HCT116 (cell line): ENCODE measurements at regions of chr15 and their contacts with region 1.

Region 1: GRCh38 chr15:50315814-50316630 is 39.0 kb downstream of the GABPB1 start:
- DNase-seq: peak; percentile 31
- ATAC-seq: peak; percentile 62
- H3K4me3 ChIP-seq: no peak overlapping the region
- H3K27ac ChIP-seq: no peak overlapping the region
- H3K4me1 ChIP-seq: no peaks in the 10 kb centered on the region; a peak in 1 of 4 replicates
- H3K27me3 ChIP-seq: no peaks in the 10 kb centered on the region
- CTCF ChIP-seq: peak; percentile 57 to 75 (median 58); a peak in 5 of 6 replicates
- POLR2A ChIP-seq: no peak
- RAD21 ChIP-seq: peak; percentile 74

Region 2: GRCh38 chr15:50182219-50183013 is 133.6 kb before region 1 on chr15:
- CTCF ChIA-PET with region 1: interaction called, 10 read pairs
- POLR2A ChIA-PET with region 1: no interaction called
- RAD21 ChIA-PET with region 1: interaction called in 1 of 2 experiments, 6 read pairs
- intact Hi-C with region 1: no loop called
- DNase-seq: peak; percentile 8
- ATAC-seq: peak; percentile 79
- H3K4me3 ChIP-seq: peak overlapping the region; percentile 56 to 68
- H3K27ac ChIP-seq: peak overlapping the region; percentile 43; the same call in 1 of the 2 replicates
- H3K4me1 ChIP-seq: peaks cover 9 to 20% of the 10 kb centered on the region in 2 experiments; a peak in 3 of 4 replicates
- H3K27me3 ChIP-seq: no peaks in the 10 kb centered on the region
- CTCF ChIP-seq: 0 out of 6 replicates have a peak, but pooled peaks of 1 of the 3 experiments have one; percentile 5
- POLR2A ChIP-seq: no peak
- RAD21 ChIP-seq: no peak

Region 3: GRCh38 chr15:50302581-50302980 is 13.4 kb before region 1 on chr15:
- CTCF ChIA-PET with region 1: interaction called, 15 read pairs
- POLR2A ChIA-PET with region 1: interaction called, 5 read pairs
- RAD21 ChIA-PET with region 1: no interaction called
- intact Hi-C with region 1: no loop called
- DNase-seq: no peak
- ATAC-seq: no peak
- H3K4me3 ChIP-seq: no peak overlapping the region
- H3K27ac ChIP-seq: no peak overlapping the region
- H3K4me1 ChIP-seq: no peaks in the 10 kb centered on the region
- H3K27me3 ChIP-seq: no peaks in the 10 kb centered on the region
- CTCF ChIP-seq: no peak
- POLR2A ChIP-seq: no peak
- RAD21 ChIP-seq: no peak

Region 4: DNA sequence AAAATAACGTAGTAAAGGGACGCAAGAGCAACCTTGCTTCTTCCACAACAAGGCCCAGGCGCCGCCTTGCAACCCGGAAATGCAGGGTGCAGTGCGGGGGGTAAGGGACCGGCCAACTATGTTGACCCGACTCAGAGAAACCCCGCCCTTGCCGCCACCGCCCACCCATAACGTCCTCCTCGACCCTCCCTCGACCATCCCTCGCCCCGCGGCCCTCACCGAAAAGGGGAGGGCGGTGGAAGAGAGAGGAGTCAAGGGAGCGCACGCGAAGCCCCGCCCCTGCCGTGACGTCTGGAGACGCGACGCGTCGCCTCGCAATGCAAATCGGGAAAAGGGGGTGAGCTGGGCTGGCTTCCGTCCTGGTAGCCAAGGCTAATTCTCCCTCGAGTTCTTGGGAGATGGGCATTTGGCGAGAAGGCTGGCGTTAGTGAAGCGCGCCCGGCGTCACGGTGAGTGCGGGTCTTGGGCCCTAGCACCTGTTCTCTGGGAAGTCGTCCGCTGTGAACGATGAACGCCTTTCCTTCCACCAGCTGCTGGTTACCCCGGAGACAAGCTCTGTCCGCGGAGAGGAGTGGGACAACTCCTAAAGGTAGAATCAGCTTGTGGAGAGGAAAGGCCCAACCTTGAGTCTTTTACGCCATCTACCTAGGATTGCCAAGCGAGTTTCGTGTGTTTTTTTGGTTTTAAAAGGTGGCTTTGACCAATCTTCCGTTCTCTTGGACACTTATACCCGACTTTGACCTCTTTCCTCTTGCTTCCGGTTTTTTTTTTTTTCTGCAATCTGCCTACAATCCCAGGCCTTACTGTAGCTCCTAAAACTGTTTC is 108.3 kb after region 1 on chr15 and contains the start of gene USP8:
- CTCF ChIA-PET with region 1: no interaction called
- POLR2A ChIA-PET with region 1: no interaction called
- RAD21 ChIA-PET with region 1: no interaction called
- intact Hi-C with region 1: no loop called
- DNase-seq: peak; percentile 94
- ATAC-seq: peak; percentile 97
- H3K4me3 ChIP-seq: peak within 1 kb of the TSS; percentile 62 to 76
- H3K27ac ChIP-seq: peak within 1 kb of the TSS; percentile 61
- H3K4me1 ChIP-seq: peaks cover 7 to 14% of the 10 kb centered on the region in 2 experiments
- H3K27me3 ChIP-seq: no peaks in the 10 kb centered on the region
- CTCF ChIP-seq: no peak
- POLR2A ChIP-seq: peak; percentile 80
- RAD21 ChIP-seq: no peak
- total RNA-seq, gene USP8: 67.9 TPM

Region 5: DNA sequence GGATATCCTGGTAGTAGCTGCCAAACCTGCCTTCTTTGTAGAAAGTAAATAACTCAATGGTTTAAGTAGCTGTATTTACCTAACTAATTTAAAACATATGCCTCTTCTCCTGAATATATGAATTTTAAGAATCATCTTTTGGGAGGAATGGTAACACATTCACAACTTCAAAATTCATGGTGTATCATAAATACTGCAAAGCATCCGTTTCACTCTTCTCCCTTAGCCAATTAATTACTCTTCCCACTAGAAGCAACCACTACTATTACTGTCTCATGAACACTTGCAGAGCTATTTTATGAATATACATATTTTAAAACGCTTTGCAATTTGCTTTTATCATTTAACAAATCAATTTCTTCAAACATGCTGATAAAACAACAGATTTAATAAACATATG is 289.4 kb after region 1 on chr15:
- CTCF ChIA-PET with region 1: no interaction called
- POLR2A ChIA-PET with region 1: no interaction called
- RAD21 ChIA-PET with region 1: no interaction called
- intact Hi-C with region 1: no loop called
- DNase-seq: no peak
- ATAC-seq: no peak
- H3K4me3 ChIP-seq: no peak overlapping the region
- H3K27ac ChIP-seq: no peak overlapping the region
- H3K4me1 ChIP-seq: no peaks in the 10 kb centered on the region
- H3K27me3 ChIP-seq: no peaks in the 10 kb centered on the region
- CTCF ChIP-seq: no peak
- POLR2A ChIP-seq: no peak
- RAD21 ChIP-seq: no peak